GM12878 (cell line): ENCODE measurements at regions of chr1 and their contacts with region 1.

Region 1: DNA sequence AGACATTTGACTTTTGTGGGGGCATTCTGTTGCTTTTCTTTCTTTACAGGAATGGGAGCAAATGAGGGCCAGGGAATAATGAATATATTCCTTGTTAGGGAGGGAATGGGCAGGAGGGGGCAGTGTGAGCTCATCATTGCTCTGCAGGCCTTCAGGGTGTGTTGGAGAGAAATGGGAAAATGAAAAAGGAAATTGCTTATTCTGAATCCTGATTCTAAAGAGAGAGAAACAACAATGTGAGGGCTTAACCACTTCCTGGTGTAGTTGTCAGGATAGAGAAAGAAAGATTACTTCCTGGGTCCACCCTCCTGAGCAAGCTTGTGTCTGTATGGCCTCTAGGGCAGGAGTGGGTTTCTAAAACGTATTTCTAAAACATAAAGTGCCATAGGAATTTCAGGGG is 28.3 kb downstream of the VANGL2 start:
- DNase-seq: peak; percentile 81
- ATAC-seq: peak; percentile 54
- H3K4me3 ChIP-seq: no peak overlapping the region
- H3K27ac ChIP-seq: peak overlapping the region; percentile 100
- H3K4me1 ChIP-seq: peaks cover 52% of the 10 kb centered on the region
- H3K27me3 ChIP-seq: no peaks in the 10 kb centered on the region
- CTCF ChIP-seq: peak; percentile 58 to 90 (median 58); a peak in 5 of 6 replicates
- EP300 ChIP-seq: no peak
- POLR2A ChIP-seq: no peak
- RAD21 ChIP-seq: peak; percentile 98

Region 2: DNA sequence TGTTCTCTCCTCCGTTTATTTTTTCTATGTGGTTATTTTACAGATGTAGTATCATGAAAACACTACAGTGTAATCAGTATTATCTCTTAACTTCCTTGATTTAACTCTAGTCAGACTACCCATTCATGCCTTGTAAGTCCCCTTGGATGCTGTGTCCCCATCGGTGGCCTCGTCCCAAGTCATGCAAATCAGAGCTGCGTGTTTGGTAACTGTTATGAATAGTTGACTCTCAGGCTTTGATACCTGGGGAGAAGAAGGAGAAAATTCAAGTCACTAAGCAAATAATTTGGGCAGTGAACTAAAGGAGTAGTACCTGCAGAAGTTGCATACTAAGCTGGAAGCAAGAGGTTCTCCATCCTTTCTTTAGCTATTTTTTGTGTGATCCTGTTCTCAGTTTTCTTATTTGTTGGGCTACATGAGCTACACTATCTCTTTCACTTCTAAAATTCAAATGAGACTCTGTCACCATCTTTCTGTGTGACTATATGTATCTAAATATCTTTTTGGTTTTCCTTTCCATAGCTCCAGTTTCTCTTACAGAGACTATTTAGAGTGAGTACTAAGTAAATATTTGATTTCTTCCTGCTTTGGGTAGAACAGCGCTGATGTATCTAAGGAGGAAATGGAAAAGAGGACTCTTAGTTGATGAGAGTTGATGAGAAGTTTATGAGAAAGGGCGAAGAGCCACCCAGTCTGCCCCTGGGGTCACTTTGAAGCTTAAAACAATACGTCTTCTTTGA is 22.6 kb after region 1 on chr1:
- CTCF ChIA-PET with region 1: interaction called, 12 read pairs
- POLR2A ChIA-PET with region 1: interaction called, 12 read pairs
- RAD21 ChIA-PET with region 1: interaction called, 33 read pairs
- SMC1A ChIA-PET with region 1: interaction called, 68 read pairs
- in situ Hi-C with region 1: no loop called
- intact Hi-C with region 1: loop called (anchors 1 kb)
- DNase-seq: peak; percentile 44
- ATAC-seq: peak; percentile 43
- H3K4me3 ChIP-seq: 0 out of 2 replicates have a peak overlapping the region, but pooled peaks have one; percentile 2
- H3K27ac ChIP-seq: peak overlapping the region; percentile 82
- H3K4me1 ChIP-seq: peaks cover 47% of the 10 kb centered on the region
- H3K27me3 ChIP-seq: no peaks in the 10 kb centered on the region
- CTCF ChIP-seq: no peak
- EP300 ChIP-seq: no peak
- POLR2A ChIP-seq: no peak
- RAD21 ChIP-seq: no peak

Region 3: DNA sequence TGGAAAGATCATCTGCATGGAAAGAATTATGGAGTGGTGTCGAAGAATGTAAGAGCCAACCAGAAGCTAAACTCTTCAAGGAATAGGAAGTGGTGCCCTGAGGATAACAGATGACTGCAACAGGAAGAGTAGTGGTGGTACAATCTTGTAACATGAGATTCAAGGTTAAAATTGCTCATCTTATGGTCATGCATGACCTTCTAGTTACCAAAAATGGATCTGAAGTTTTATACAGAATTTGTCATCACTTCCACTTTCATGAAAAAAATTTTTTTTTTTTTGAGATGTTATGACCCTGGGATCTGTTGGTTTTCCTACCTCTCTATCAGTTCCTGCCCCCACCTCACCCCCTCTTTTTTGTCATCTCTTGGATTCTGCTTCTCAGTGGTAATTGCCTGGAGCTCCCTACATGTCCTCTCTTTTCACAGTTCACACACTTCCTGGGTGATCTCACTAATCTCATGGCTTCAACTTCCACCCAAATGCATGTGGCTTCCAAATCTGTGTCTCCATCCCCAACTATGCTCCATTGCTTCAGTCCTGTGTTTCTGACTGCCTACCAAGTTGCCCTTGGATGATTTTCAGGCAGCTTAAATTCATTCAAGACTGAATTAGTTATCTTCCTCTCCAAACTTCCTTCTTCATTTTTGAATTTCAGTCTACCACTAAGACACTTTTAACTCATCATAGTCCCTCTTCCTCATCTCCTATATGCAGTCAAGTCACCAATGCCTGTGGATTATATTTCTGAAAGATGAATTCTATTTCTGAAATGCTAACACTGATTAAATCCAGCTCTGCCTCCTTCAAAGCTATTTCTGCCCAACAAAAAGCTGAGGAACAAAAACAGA is 46.0 kb after region 1 on chr1:
- CTCF ChIA-PET with region 1: interaction called, 4 read pairs
- POLR2A ChIA-PET with region 1: no interaction called
- RAD21 ChIA-PET with region 1: interaction called, 4 read pairs
- SMC1A ChIA-PET with region 1: interaction called, 10 read pairs
- in situ Hi-C with region 1: no loop called
- intact Hi-C with region 1: loop called (anchors 5 kb)
- DNase-seq: peak; percentile 47
- ATAC-seq: peak; percentile 95
- H3K4me3 ChIP-seq: no peak overlapping the region; the same call in 1 of the 2 replicates
- H3K27ac ChIP-seq: peak overlapping the region; percentile 77
- H3K4me1 ChIP-seq: peaks cover 28% of the 10 kb centered on the region
- H3K27me3 ChIP-seq: no peaks in the 10 kb centered on the region
- CTCF ChIP-seq: no peak
- EP300 ChIP-seq: no peak; a peak in 1 of 4 replicates
- POLR2A ChIP-seq: no peak
- RAD21 ChIP-seq: no peak

Region 4: DNA sequence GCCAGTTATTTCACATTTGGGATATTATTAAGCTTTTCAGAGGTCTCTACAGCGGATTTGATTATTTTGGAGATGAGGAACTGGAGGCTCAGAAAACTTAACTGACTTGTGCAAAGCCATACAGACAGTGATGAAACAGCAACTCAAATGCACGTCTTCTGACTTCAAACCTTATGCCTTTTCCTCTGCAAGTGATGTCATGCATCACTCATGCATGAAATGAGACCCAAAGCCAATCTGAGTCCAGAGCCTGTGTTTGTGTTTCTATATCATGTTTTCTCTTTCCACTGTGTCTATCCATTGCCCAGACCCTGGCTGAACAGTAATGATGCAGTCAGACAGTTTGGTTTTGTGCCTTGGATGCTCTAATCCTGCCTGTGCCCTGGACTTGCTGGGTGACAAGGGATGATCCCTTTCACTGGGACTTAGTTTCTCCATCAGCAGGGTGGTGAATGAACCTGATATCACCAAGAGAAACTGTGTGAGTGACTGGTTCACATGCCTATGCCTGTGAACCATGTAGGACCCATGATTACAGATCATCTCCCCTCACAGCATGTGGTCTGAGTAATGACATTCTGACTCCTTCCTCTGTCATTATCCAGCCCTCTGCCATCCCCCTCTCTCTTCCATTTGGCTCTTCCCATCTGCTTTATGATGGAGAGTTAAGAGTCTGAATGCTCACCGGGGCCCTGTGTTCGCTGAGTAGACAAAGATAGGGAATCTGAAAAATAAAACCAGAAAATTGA is 61.0 kb after region 1 on chr1:
- CTCF ChIA-PET with region 1: interaction called, 10 read pairs
- POLR2A ChIA-PET with region 1: no interaction called
- RAD21 ChIA-PET with region 1: interaction called, 25 read pairs
- SMC1A ChIA-PET with region 1: interaction called, 20 read pairs
- in situ Hi-C with region 1: no loop called
- intact Hi-C with region 1: no loop called
- DNase-seq: no peak
- ATAC-seq: peak; percentile 37
- H3K4me3 ChIP-seq: no peak overlapping the region
- H3K27ac ChIP-seq: peak overlapping the region; percentile 68
- H3K4me1 ChIP-seq: peaks cover 17% of the 10 kb centered on the region
- H3K27me3 ChIP-seq: no peaks in the 10 kb centered on the region
- CTCF ChIP-seq: no peak
- EP300 ChIP-seq: no peak
- POLR2A ChIP-seq: no peak
- RAD21 ChIP-seq: no peak

Region 5: GRCh38 chr1:160539990-160540858 is 111.6 kb after region 1 on chr1:
- CTCF ChIA-PET with region 1: interaction called, 153 read pairs
- POLR2A ChIA-PET with region 1: interaction called, 15 read pairs
- RAD21 ChIA-PET with region 1: interaction called, 156 read pairs
- SMC1A ChIA-PET with region 1: interaction called, 100 read pairs
- in situ Hi-C with region 1: loop called (anchors 5 kb)
- intact Hi-C with region 1: no loop called
- DNase-seq: peak; percentile 95
- ATAC-seq: peak; percentile 95
- H3K4me3 ChIP-seq: peak overlapping the region; percentile 38; the same call in 1 of the 2 replicates
- H3K27ac ChIP-seq: peak overlapping the region; percentile 92
- H3K4me1 ChIP-seq: peaks cover 23% of the 10 kb centered on the region
- H3K27me3 ChIP-seq: no peaks in the 10 kb centered on the region
- CTCF ChIP-seq: no peak
- EP300 ChIP-seq: peak; percentile 53 to 73; a peak in 3 of 4 replicates
- POLR2A ChIP-seq: peak; percentile 66
- RAD21 ChIP-seq: 0 out of 2 replicates have a peak, but pooled peaks have one; percentile 11

Region 6: DNA sequence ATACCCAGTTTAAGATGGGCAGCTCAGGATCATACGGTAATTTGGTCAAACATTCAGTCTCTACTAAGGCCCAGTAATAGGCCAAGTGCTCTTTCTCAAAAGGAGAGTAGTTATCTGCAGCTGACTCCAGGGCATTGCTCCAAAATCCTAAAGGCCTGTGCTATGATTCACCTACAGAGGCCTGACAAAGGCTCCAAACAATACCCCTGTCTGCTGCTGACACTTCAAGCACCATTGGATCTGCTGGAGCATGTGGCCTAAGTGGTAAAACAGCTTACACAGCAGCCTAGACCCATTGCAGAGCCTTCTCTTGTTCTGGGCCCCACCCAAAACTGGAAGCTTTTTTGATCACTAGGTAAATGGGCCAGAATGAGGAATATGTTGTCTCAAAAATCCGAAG is 333.2 kb after region 1 on chr1:
- CTCF ChIA-PET with region 1: no interaction called
- POLR2A ChIA-PET with region 1: no interaction called
- RAD21 ChIA-PET with region 1: no interaction called
- SMC1A ChIA-PET with region 1: no interaction called
- in situ Hi-C with region 1: no loop called
- intact Hi-C with region 1: no loop called
- DNase-seq: no peak
- ATAC-seq: no peak
- H3K4me3 ChIP-seq: no peak overlapping the region
- H3K27ac ChIP-seq: no peak overlapping the region
- H3K4me1 ChIP-seq: peaks cover 3% of the 10 kb centered on the region
- H3K27me3 ChIP-seq: no peaks in the 10 kb centered on the region
- CTCF ChIP-seq: no peak
- EP300 ChIP-seq: no peak
- POLR2A ChIP-seq: no peak
- RAD21 ChIP-seq: no peak